ENCODE measurements at regions of chr11 and their contacts with region 1.

Region 1: GRCh38 chr11:77047007-77047927 is 13.1 kb downstream of the B3GNT6 start:
- DNase-seq: no peak
- ATAC-seq: peak; percentile 93

Region 2: DNA sequence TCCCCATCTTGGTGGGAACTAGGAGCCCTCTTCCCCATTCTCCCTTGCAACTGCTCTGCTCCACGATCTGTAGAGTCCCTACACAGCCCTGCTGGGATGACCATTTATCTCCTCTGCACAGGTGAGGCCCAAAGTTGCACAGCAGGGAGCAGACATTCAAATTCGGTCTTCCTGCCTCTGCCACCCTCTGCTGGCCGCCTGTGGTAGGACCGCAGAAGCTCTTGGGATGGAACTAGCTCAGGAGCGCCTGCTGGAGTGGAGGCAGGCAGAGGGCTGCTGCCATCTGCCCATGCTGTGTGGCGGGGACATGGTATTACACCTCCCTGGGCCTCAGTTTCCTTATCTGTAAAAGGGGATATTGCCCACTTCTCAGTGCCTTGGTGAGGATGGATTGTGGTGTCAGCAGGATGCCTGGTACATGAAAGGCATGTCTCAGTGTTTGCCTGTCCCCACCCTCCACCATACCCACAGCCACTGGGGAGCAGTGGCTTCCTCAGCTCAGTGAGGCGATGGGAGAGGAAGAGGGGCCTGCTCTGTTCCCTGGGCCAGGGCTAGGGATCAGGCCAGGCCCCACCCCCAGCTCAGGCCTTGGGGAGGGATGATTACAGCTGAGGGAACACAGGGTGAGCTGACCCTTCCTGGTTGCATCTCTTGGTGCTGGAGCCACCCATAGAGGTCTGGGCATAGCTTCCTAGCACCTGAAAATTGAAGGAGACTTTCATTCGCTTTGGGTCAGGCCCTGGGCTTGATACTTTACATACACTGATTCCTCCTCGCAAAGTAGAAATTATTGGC is 44.1 kb after region 1 on chr11:
- intact Hi-C with region 1: loop called (anchors 10 kb)
- DNase-seq: peak; percentile 87
- ATAC-seq: peak; percentile 83

Measured in left ventricle myocardium superior (tissue), 1 donor.